ENCODE measurements at regions of chr20 and their contacts with region 1.

Region 1: DNA sequence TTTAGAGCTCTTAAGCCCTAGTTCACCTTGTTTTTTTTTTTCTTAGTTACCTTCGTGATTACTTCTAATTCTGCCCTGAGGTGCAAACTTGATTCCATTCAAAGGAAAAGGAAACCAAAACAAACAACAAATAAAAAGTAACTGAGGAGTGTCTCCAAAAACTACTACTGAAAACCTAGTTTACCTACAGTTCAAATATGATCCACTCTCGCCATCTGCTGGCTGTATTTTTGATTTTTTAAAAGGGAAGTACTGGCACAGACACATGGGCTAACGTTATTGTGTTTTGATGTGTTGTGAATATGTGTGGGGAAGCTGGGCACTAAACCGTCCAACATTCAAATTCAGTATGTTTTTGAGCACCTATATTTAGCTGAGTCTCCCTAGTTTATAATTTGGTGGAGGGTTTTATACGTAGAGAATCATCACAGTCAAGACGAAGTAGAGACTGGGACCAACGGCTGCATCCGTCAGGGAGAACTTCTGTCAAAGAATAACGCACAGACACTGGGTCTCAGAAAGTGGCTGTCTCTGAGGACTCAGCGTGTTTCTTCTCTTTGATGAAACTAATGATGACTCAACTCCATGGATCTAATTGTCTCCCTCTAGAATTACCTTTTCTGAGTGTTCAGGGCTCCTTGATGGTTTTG is 373.5 kb upstream of the BTBD3 start:
- DNase-seq: peak; percentile 75
- H3K4me3 Mint-ChIP-seq: no peak overlapping the region
- H3K27ac Mint-ChIP-seq: no peak overlapping the region
- H3K4me1 Mint-ChIP-seq: no peaks in the 10 kb centered on the region
- H3K27me3 Mint-ChIP-seq: no peaks in the 10 kb centered on the region
- CTCF ChIP-seq: peak; percentile 73

Region 2: GRCh38 chr20:10469599-10469998 is 1074.6 kb before region 1 on chr20:
- CTCF ChIA-PET with region 1: interaction called, 3 read pairs
- POLR2A ChIA-PET with region 1: no interaction called
- intact Hi-C with region 1: loop called (anchors 5 kb)
- DNase-seq: peak; percentile 81
- H3K4me3 Mint-ChIP-seq: no peak overlapping the region
- H3K27ac Mint-ChIP-seq: peak overlapping the region; percentile 59
- H3K4me1 Mint-ChIP-seq: peaks cover 13% of the 10 kb centered on the region
- H3K27me3 Mint-ChIP-seq: no peaks in the 10 kb centered on the region
- CTCF ChIP-seq: peak; percentile 61

Region 3: GRCh38 chr20:11140359-11140758 is 403.8 kb before region 1 on chr20:
- CTCF ChIA-PET with region 1: interaction called, 10 read pairs
- POLR2A ChIA-PET with region 1: no interaction called
- intact Hi-C with region 1: loop called (anchors 5 kb)
- DNase-seq: peak; percentile 84
- H3K4me3 Mint-ChIP-seq: no peak overlapping the region
- H3K27ac Mint-ChIP-seq: peak overlapping the region; percentile 29
- H3K4me1 Mint-ChIP-seq: peaks cover 6% of the 10 kb centered on the region
- H3K27me3 Mint-ChIP-seq: no peaks in the 10 kb centered on the region
- CTCF ChIP-seq: no peak

Region 4: DNA sequence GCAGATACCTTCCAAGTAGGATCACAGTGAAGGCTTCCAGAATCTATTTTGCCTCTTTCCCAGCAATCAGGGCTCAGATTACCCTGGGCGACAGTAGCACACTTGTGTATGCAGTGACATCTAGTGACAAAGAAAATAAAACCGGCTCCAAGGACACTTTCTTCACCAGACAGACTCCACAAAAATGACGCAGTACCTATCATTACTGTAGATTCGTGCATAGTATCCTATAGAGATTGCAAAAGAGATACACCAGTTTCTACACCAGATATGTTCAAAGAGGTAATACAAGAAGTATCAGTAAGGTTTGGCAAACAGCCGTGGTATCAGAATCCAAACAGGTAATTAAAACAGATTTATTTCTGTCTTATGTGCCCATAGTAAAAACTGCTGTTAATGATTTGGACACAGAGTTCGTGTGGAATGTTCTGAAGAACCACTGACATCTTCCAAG is 270.0 kb before region 1 on chr20:
- CTCF ChIA-PET with region 1: interaction called, 9 read pairs
- POLR2A ChIA-PET with region 1: no interaction called
- intact Hi-C with region 1: loop called (anchors 1 kb)
- DNase-seq: peak; percentile 78
- H3K4me3 Mint-ChIP-seq: no peak overlapping the region
- H3K27ac Mint-ChIP-seq: peak overlapping the region; percentile 29
- H3K4me1 Mint-ChIP-seq: peaks cover 6% of the 10 kb centered on the region
- H3K27me3 Mint-ChIP-seq: no peaks in the 10 kb centered on the region
- CTCF ChIP-seq: peak; percentile 59

Region 5: GRCh38 chr20:11350126-11351005 is 193.8 kb before region 1 on chr20:
- CTCF ChIA-PET with region 1: interaction called, 11 read pairs
- POLR2A ChIA-PET with region 1: no interaction called
- intact Hi-C with region 1: no loop called
- DNase-seq: peak; percentile 95
- H3K4me3 Mint-ChIP-seq: peak overlapping the region; percentile 39
- H3K27ac Mint-ChIP-seq: peak overlapping the region; percentile 24
- H3K4me1 Mint-ChIP-seq: peaks cover 24% of the 10 kb centered on the region
- H3K27me3 Mint-ChIP-seq: no peaks in the 10 kb centered on the region
- CTCF ChIP-seq: peak; percentile 15